ENCODE measurements at regions of chr20 and their contacts with region 1.

Region 1: GRCh38 chr20:53578492-53579222 is 15.0 kb downstream of the ZNF217 start:
- DNase-seq: peak in 2 of 5 donors; percentile 68 to 76
- ATAC-seq: peak in 3 of 4 donors; percentile 71 to 81 (median 80)
- H3K4me3 ChIP-seq: peak overlapping the region in 5 of 12 donors; percentile 6 to 52 (median 17)
- H3K27ac ChIP-seq: peak overlapping the region in 10 of 12 donors; percentile 10 to 91 (median 52)
- H3K4me1 ChIP-seq: peaks cover 0 to 68% (median 34%) of the 10 kb centered on the region in 12 donors
- H3K27me3 ChIP-seq: no peaks in the 10 kb centered on the region
- CTCF ChIP-seq: peak; percentile 74 to 94 (median 90)
- POLR2A ChIP-seq: no peak

Region 2: DNA sequence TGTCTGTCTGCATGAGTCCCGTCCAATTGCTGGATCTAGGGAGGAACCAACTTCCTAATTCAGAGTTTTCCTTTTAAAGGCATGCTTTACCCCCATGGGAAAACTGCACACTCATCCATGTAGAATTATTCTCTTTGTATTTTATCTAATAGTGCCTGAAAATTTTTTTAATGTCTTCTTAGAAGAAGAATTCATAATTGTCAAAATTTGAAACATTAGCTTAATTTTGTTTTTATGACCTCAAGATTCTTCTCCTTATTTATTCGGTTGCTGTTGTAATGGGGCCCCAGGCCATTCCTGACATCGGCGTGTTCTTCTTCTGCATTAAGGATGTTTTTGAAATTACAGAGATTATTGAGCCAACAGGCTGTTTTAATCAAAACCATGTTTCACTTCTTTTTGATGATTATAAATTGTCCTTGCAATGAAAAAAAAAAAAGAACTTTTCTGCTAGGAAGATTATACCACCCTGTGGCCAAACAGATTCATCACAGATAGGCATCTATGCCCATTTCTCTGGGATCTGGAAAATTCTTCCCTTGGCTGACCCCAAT is 85.3 kb before region 1 on chr20:
- intact Hi-C with region 1: no loop called
- DNase-seq: no peak
- ATAC-seq: no peak
- H3K4me3 ChIP-seq: no peak overlapping the region
- H3K27ac ChIP-seq: no peak overlapping the region
- H3K4me1 ChIP-seq: peaks cover 0 to 22% (median 0%) of the 10 kb centered on the region in 12 donors
- H3K27me3 ChIP-seq: no peaks in the 10 kb centered on the region
- CTCF ChIP-seq: peak in 9 of 12 donors; percentile 13 to 43 (median 22)
- POLR2A ChIP-seq: no peak

Region 3: DNA sequence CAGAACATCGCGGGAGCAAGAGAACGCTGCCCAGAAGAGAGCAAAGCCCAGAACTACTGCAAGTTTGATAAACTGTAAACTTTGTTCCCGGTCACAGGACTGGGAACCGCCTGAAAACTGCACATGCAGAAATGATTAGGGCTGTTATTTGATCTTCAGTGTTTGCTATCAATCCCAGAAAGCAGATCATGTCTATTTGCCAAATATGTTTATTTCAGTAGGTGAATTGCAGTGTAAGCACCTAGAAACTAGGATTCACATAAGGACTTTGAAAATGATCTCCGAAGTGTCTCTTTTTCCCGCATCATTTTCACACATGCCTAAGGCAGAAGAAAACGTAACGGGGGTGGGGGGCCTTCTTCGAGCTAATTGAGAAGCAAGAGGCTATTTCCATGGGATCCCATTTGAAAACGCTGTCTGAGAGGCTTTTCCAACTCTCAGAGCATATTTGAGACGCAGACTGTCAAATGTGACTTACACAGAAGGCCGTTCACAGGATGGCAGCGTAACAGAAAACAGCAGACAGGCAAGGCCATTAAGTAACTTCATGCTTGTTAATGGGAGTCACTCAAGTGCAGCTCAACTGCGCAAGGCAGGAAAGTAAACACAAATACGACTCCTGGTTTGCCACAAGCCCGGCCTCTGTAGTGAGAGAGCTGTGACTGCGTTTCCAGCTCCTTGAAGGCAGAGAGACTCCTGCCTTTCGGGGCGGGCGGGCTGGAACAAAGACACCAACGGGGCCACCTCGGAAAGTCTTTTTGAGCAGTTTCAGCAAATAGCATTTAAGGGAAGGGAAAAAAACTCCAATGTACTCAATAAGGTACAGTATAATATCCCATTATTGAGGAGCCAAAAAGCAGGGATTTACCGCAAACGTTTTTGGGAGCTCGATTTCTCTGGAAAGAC is 159.6 kb after region 1 on chr20:
- intact Hi-C with region 1: loop called in 2 of 10 experiments (anchors 5 to 10 kb)
- DNase-seq: peak; percentile 55 to 73 (median 68)
- ATAC-seq: peak; percentile 59 to 88 (median 86)
- H3K4me3 ChIP-seq: peak overlapping the region in 9 of 12 donors; percentile 0 to 29 (median 12)
- H3K27ac ChIP-seq: peak overlapping the region in 11 of 12 donors; percentile 47 to 82 (median 67)
- H3K4me1 ChIP-seq: peaks cover 3 to 64% (median 40%) of the 10 kb centered on the region in 12 donors
- H3K27me3 ChIP-seq: no peaks in the 10 kb centered on the region
- CTCF ChIP-seq: no peak
- POLR2A ChIP-seq: no peak

Region 4: GRCh38 chr20:53828682-53829254 is 250.1 kb after region 1 on chr20:
- intact Hi-C with region 1: loop called in 1 of 10 experiments (anchors 10 kb)
- DNase-seq: peak in 3 of 5 donors; percentile 29 to 53 (median 39)
- ATAC-seq: peak; percentile 74 to 88 (median 84)
- H3K4me3 ChIP-seq: peak overlapping the region in 10 of 12 donors; percentile 13 to 45 (median 32)
- H3K27ac ChIP-seq: peak overlapping the region; percentile 74 to 93 (median 86)
- H3K4me1 ChIP-seq: peaks cover 0 to 48% (median 13%) of the 10 kb centered on the region in 12 donors
- H3K27me3 ChIP-seq: no peaks in the 10 kb centered on the region
- CTCF ChIP-seq: peak in 3 of 12 donors; percentile 26 to 35 (median 27)
- POLR2A ChIP-seq: no peak

Region 5: DNA sequence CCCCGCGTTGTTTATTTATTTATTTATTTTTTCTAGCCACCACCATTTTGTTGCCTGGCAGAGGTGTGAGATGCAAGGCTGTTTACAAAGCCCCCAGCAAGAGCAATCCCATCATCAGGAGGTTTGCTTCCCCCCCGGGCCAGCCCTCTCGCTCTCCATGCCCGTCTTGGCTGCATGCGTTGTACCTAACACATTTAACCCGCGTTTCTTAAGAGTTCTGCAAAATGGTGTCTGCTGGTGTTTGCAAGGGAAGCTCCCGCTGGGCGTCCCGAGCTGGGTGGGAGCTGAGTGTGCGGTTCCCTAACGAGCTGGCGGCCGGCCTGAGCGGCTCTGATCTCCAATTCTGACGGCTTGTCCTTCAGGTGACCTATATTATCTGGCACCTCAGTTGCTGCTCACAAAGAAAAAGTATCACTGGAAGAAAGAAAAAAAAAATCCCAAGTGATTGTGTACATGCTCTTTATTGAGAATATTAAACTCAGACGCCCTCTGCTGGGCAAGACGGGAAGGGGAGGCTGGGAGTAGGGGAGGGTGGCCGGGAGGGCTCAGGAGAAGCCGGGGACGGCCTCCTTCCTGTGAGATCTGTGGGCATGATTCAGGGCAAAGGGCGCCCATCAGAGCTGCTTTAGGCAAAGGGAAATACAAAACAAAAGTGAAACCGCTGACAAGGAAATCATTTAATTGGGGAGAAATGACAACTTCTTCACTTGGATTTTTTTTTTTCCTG is 337.0 kb after region 1 on chr20:
- intact Hi-C with region 1: loop called (anchors 1 to 5 kb)
- DNase-seq: peak; percentile 94 to 97 (median 95)
- ATAC-seq: peak; percentile 86 to 92 (median 90)
- H3K4me3 ChIP-seq: peak overlapping the region; percentile 53 to 80 (median 66)
- H3K27ac ChIP-seq: peak overlapping the region; percentile 79 to 94 (median 88)
- H3K4me1 ChIP-seq: peaks cover 0 to 46% (median 29%) of the 10 kb centered on the region in 12 donors
- H3K27me3 ChIP-seq: no peaks in the 10 kb centered on the region
- CTCF ChIP-seq: peak; percentile 79 to 98 (median 88)
- POLR2A ChIP-seq: no peak

Region 6: GRCh38 chr20:54062812-54063280 is 484.2 kb after region 1 on chr20:
- intact Hi-C with region 1: loop called in 7 of 10 experiments (anchors 5 to 10 kb)
- DNase-seq: no peak
- ATAC-seq: peak in 2 of 4 donors; percentile 66 to 74
- H3K4me3 ChIP-seq: no peak overlapping the region
- H3K27ac ChIP-seq: no peak overlapping the region
- H3K4me1 ChIP-seq: peaks cover 0 to 9% (median 0%) of the 10 kb centered on the region in 12 donors
- H3K27me3 ChIP-seq: peaks cover 0 to 12% (median 0%) of the 10 kb centered on the region in 9 donors
- CTCF ChIP-seq: peak; percentile 27 to 71 (median 62)
- POLR2A ChIP-seq: no peak

Measured in heart left ventricle (tissue), 16 donors.